GM12878 (cell line): ENCODE measurements at regions of chr1 and their contacts with region 1.

Region 1: GRCh38 chr1:13725714-13726175 is 25.8 kb downstream of the PRDM2 start:
- DNase-seq: no peak
- ATAC-seq: peak; percentile 62
- H3K4me3 ChIP-seq: no peak overlapping the region
- H3K27ac ChIP-seq: peak overlapping the region; percentile 27
- H3K4me1 ChIP-seq: peaks cover 42% of the 10 kb centered on the region
- H3K27me3 ChIP-seq: no peaks in the 10 kb centered on the region
- CTCF ChIP-seq: peak; percentile 57 to 69 (median 62); a peak in 5 of 6 replicates
- EP300 ChIP-seq: no peak
- POLR2A ChIP-seq: no peak
- RAD21 ChIP-seq: peak; percentile 77

Region 2: GRCh38 chr1:13543451-13544220 is 182.1 kb before region 1 on chr1:
- CTCF ChIA-PET with region 1: no interaction called
- POLR2A ChIA-PET with region 1: no interaction called
- RAD21 ChIA-PET with region 1: no interaction called
- SMC1A ChIA-PET with region 1: no interaction called
- in situ Hi-C with region 1: no loop called
- intact Hi-C with region 1: no loop called
- DNase-seq: no peak
- ATAC-seq: no peak
- H3K4me3 ChIP-seq: no peak overlapping the region
- H3K27ac ChIP-seq: no peak overlapping the region
- H3K4me1 ChIP-seq: no peaks in the 10 kb centered on the region
- H3K27me3 ChIP-seq: no peaks in the 10 kb centered on the region
- CTCF ChIP-seq: peak in 2 of 3 experiments; percentile 8 to 16; a peak in 2 of 6 replicates
- EP300 ChIP-seq: no peak
- POLR2A ChIP-seq: no peak
- RAD21 ChIP-seq: no peak

Region 3: GRCh38 chr1:13662493-13662892 is 63.3 kb before region 1 on chr1:
- CTCF ChIA-PET with region 1: interaction called, 88 read pairs
- POLR2A ChIA-PET with region 1: interaction called, 8 read pairs
- RAD21 ChIA-PET with region 1: interaction called, 50 read pairs
- SMC1A ChIA-PET with region 1: interaction called, 121 read pairs
- in situ Hi-C with region 1: loop called (anchors 5 kb)
- intact Hi-C with region 1: loop called (anchors 1 kb)
- DNase-seq: no peak
- ATAC-seq: no peak
- H3K4me3 ChIP-seq: no peak overlapping the region
- H3K27ac ChIP-seq: no peak overlapping the region
- H3K4me1 ChIP-seq: peaks cover 22% of the 10 kb centered on the region
- H3K27me3 ChIP-seq: no peaks in the 10 kb centered on the region
- CTCF ChIP-seq: no peak
- EP300 ChIP-seq: no peak
- POLR2A ChIP-seq: no peak
- RAD21 ChIP-seq: no peak

Region 4: DNA sequence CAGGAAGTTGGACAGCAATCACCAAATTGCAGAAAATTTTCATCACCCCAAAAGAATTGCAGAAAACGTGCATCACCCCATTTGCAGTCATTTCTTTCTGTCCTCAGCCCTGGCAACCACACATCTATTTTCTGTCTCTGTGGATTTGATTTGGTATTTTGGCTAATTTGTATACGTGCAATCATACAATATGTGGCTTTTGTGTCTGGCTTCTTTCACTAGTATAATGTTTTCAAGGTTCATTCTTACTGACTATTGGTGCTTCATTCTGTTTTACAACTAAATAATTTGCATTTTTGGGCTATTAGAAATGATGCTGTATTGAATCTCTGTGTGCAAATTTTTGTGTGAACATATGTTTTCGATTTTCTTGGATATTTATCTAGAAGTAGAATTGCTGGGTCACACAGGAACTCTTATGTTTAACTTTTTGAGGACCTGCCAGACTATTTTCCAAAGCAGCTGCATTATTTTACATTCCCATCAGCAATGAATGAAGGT is 50.5 kb before region 1 on chr1:
- CTCF ChIA-PET with region 1: interaction called, 21 read pairs
- POLR2A ChIA-PET with region 1: no interaction called
- RAD21 ChIA-PET with region 1: interaction called, 3 read pairs
- SMC1A ChIA-PET with region 1: interaction called, 121 read pairs
- in situ Hi-C with region 1: no loop called
- intact Hi-C with region 1: no loop called
- DNase-seq: no peak
- ATAC-seq: no peak
- H3K4me3 ChIP-seq: no peak overlapping the region
- H3K27ac ChIP-seq: no peak overlapping the region
- H3K4me1 ChIP-seq: peaks cover 4% of the 10 kb centered on the region
- H3K27me3 ChIP-seq: no peaks in the 10 kb centered on the region
- CTCF ChIP-seq: no peak
- EP300 ChIP-seq: no peak
- POLR2A ChIP-seq: no peak
- RAD21 ChIP-seq: no peak

Region 5: GRCh38 chr1:13699936-13700520 is 25.7 kb before region 1 on chr1 and contains the start of gene PRDM2:
- CTCF ChIA-PET with region 1: interaction called, 212 read pairs
- POLR2A ChIA-PET with region 1: interaction called, 60 read pairs
- RAD21 ChIA-PET with region 1: interaction called, 367 read pairs
- SMC1A ChIA-PET with region 1: interaction called, 425 read pairs
- in situ Hi-C with region 1: no loop called
- intact Hi-C with region 1: no loop called
- DNase-seq: no peak
- ATAC-seq: peak; percentile 28
- H3K4me3 ChIP-seq: peak within 1 kb of the TSS; percentile 89
- H3K27ac ChIP-seq: peak within 1 kb of the TSS; percentile 96
- H3K4me1 ChIP-seq: peaks cover 22% of the 10 kb centered on the region
- H3K27me3 ChIP-seq: no peaks in the 10 kb centered on the region
- CTCF ChIP-seq: no peak
- EP300 ChIP-seq: no peak
- POLR2A ChIP-seq: peak; percentile 58
- RAD21 ChIP-seq: no peak
- polyA plus RNA-seq, gene PRDM2: 8.4 to 8.6 TPM

Region 6: GRCh38 chr1:13714851-13715250 is 10.9 kb before region 1 on chr1:
- CTCF ChIA-PET with region 1: interaction called, 212 read pairs
- POLR2A ChIA-PET with region 1: interaction called, 48 read pairs
- RAD21 ChIA-PET with region 1: interaction called, 367 read pairs
- SMC1A ChIA-PET with region 1: interaction called, 425 read pairs
- in situ Hi-C with region 1: no loop called
- intact Hi-C with region 1: no loop called
- DNase-seq: no peak
- ATAC-seq: no peak
- H3K4me3 ChIP-seq: no peak overlapping the region
- H3K27ac ChIP-seq: no peak overlapping the region
- H3K4me1 ChIP-seq: peaks cover 8% of the 10 kb centered on the region
- H3K27me3 ChIP-seq: no peaks in the 10 kb centered on the region
- CTCF ChIP-seq: 0 out of 6 replicates have a peak, but pooled peaks of 2 of the 3 experiments have one; percentile 4 to 5
- EP300 ChIP-seq: no peak
- POLR2A ChIP-seq: no peak
- RAD21 ChIP-seq: no peak

Region 7: DNA sequence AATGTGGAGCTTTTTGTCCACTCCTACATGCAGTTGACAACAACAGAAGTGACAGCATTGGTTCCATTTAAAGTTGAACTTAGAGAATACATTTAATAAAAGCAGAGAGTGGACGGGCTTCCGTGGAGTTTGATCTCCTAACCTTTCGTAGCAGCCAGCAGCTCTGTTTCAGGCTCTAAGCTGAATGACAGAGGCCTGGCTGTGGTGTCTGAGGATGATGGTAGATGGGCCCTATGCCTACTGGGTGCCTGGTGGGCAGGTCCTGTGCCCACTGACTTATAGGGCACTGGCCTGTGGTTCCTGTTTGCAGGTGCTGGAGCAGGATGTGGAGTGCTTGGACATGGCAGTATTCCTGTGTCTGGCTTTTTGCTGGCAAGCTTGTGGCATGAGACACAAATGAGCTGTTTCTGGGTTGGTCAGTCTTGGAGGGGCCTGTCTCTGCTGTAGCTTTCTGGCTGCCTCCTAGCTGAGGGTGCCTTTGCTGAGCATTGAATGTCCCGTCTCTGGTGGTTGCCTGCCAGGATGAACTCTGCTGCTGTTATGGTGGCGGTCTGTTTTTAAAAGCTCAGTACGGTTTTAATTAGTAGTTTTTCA is 28.9 kb after region 1 on chr1:
- CTCF ChIA-PET with region 1: interaction called, 36 read pairs
- POLR2A ChIA-PET with region 1: interaction called, 6 read pairs
- RAD21 ChIA-PET with region 1: interaction called, 28 read pairs
- SMC1A ChIA-PET with region 1: interaction called, 18 read pairs
- in situ Hi-C with region 1: no loop called
- intact Hi-C with region 1: loop called (anchors 2 kb)
- DNase-seq: no peak
- ATAC-seq: peak; percentile 13
- H3K4me3 ChIP-seq: peak overlapping the region; percentile 19; the same call in 1 of the 2 replicates
- H3K27ac ChIP-seq: peak overlapping the region; percentile 56
- H3K4me1 ChIP-seq: peaks cover 26% of the 10 kb centered on the region
- H3K27me3 ChIP-seq: no peaks in the 10 kb centered on the region
- CTCF ChIP-seq: no peak
- EP300 ChIP-seq: no peak
- POLR2A ChIP-seq: peak; percentile 36; the same call in 1 of the 2 replicates
- RAD21 ChIP-seq: no peak